ENCODE measurements at regions of chr12 and their contacts with region 1.

Region 1: DNA sequence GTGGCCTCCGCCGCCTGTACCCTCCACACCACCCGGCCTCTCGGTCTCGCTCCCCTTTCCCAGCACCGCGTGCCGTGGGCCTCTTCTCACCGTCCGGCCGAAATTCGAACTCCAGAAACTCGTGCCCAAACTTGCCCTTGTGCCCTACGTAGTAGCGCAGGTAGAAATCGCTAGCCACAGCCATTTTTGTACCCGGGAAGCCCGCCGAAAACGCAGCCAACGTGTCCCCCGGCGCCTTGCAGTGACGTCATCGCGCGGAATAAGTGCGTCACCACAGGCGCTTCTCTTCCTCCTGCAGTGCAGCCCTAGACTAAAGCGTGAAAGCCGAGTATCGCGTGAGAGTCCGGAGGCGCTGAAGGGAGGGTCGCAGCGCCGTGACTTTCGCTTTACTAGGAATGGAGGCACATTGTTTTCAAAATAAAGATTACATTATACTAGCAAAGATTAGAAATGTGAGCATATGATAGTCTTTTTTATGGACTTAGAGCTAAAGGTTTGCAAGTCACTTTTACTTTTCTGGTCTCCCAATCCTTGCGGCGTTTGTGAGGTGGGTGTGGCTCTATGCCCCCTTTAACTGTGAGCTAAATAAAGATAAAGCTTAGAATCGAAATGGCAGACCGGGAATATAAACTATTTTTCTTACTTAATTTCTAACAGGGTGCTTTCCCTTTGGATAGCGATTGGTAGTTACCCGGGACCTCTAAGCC is at the start of gene MAGOHB:
- DNase-seq: peak; percentile 95
- ATAC-seq: peak; percentile 100
- total RNA-seq, gene MAGOHB: 13.6 to 18.4 TPM

Region 2: DNA sequence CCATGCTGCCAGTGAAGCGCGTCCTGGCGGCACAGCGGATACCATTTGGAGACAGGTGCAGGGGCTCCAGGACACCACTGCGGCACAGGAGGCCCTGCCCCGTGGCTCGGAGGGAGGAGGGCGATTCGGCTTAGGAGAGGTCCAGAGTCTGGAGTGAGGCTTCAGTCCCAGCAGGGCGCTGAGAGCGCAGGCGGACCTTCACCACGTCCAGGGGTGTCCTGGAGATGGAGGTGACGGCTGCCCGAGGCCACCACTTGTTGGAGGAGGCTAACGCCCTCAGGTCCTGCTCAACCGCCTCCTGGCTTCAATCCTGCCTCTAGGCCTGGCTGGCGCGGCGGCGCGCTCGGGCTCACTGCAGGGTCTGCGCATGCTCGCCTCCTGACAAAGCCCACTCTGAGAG is 62.1 kb before region 1 on chr12:
- intact Hi-C with region 1: no loop called
- DNase-seq: no peak
- ATAC-seq: no peak

Region 3: GRCh38 chr12:10721651-10722501 is 108.4 kb after region 1 on chr12:
- intact Hi-C with region 1: loop called in 1 of 2 experiments (anchors 10 kb)
- DNase-seq: peak; percentile 94
- ATAC-seq: peak; percentile 87 to 92

Region 4: GRCh38 chr12:10749700-10750384 is 136.3 kb after region 1 on chr12:
- intact Hi-C with region 1: loop called in 1 of 2 experiments (anchors 2 kb)
- DNase-seq: peak; percentile 67
- ATAC-seq: peak; percentile 91 to 96

Measured in left cardiac atrium (tissue), 4 donors.